ENCODE measurements at regions of chr19 and their contacts with region 1.

Region 1: GRCh38 chr19:41144403-41144802 is 30.2 kb downstream of the CYP2F1 start:
- DNase-seq: peak; percentile 74 to 93 (median 75)
- ATAC-seq: peak; percentile 74 to 83
- H3K4me3 ChIP-seq: no peak overlapping the region
- H3K27ac ChIP-seq: no peak overlapping the region
- H3K4me1 ChIP-seq: no peaks in the 10 kb centered on the region
- H3K27me3 ChIP-seq: no peaks in the 10 kb centered on the region

Region 2: DNA sequence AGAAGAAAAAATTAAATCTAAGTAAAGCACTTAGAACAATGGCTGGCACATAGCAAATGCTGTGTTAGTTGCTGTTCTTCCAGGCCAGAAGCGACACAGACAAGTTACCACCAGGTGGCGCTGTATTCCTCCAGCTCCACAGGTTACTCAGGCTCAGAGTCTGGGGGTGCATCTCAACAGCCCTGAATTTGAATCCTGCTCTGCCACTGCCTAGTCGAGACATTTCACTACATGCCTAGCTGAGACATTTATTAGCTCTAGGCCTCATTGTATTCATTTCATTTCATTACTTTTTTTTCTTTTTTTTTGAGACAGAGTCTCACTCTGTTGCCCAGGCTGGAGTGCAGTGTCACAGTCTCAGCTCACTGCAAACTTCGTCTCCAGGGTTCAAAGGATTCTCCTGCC is 169.8 kb before region 1 on chr19:
- intact Hi-C with region 1: loop called in 3 of 4 experiments (anchors 5 to 10 kb)
- DNase-seq: peak; percentile 59 to 81 (median 77)
- ATAC-seq: peak; percentile 48 to 72
- H3K4me3 ChIP-seq: no peak overlapping the region
- H3K27ac ChIP-seq: no peak overlapping the region
- H3K4me1 ChIP-seq: no peaks in the 10 kb centered on the region
- H3K27me3 ChIP-seq: no peaks in the 10 kb centered on the region

Region 3: DNA sequence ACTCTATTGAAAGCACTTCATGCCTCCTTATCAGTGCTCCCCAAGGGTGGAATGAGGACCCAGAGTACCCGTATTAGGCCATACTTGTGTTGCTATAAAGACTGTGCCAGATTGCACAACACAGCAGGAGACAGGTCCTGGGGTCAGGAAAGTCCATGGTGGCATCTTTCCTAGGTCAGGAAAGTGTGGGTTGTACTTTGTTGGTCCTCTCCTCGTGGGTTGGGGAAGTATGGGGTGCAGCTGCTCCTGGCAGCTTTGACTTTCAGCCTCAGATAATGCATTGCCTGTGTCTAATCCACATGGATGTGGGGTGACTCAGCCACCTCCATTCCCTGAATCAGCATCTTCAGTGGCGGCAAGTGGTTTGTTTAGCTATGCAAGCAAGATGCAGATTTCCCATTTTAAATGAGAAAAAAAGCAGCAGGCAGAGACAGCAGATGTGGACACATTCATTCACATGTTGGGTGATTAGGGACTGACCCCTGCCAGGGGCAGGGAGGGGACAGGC is 161.8 kb before region 1 on chr19:
- intact Hi-C with region 1: loop called in 3 of 4 experiments (anchors 10 kb)
- DNase-seq: no peak
- ATAC-seq: no peak
- H3K4me3 ChIP-seq: no peak overlapping the region
- H3K27ac ChIP-seq: no peak overlapping the region
- H3K4me1 ChIP-seq: no peaks in the 10 kb centered on the region
- H3K27me3 ChIP-seq: peaks cover 3% of the 10 kb centered on the region

Region 4: GRCh38 chr19:41089955-41090354 is 54.4 kb before region 1 on chr19:
- intact Hi-C with region 1: no loop called
- DNase-seq: no peak
- ATAC-seq: no peak
- H3K4me3 ChIP-seq: no peak overlapping the region
- H3K27ac ChIP-seq: no peak overlapping the region
- H3K4me1 ChIP-seq: no peaks in the 10 kb centered on the region
- H3K27me3 ChIP-seq: no peaks in the 10 kb centered on the region

Measured in right cardiac atrium (tissue), 5 donors.